ENCODE measurements at regions of chr13 and their contacts with region 1.

Region 1: DNA sequence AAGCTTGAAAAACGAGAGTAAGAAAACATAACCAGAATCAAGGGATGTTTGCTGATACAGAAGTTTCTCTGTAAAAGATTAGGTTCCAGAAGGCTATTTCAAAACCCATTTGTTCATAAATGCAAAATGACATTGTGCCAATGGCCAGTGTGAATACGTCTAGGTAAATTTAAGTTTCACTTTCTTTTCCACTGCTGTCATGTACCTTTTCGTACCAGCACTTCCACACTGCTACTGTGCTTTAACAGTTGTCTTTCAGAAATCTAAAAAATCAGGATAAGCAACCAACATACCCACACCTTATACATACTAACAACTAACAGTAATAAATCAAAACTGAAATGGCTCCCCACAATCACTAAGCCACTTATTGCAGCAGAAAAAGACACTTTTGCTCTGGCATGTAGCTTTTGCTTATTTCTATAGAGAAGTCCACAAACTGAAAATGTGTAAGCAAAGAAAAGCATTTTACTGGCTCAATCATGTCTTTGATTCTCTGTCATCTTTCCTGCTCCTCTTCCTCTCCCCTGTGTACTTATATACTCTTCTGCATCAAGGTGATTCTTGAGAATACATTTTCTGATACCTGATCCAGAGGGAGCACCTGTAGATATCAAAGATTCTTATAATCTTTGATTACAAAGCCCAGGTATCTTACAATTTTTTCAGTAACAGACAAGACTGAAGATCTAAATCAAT is 34.3 kb downstream of the ELF1 start:
- DNase-seq: no peak
- H3K4me3 ChIP-seq: peak overlapping the region in 2 of 4 donors; percentile 22 to 26
- H3K27ac ChIP-seq: peak overlapping the region; percentile 37 to 65 (median 58)
- H3K4me1 ChIP-seq: peaks cover 0 to 66% (median 39%) of the 10 kb centered on the region in 4 donors
- H3K27me3 ChIP-seq: no peaks in the 10 kb centered on the region
- CTCF ChIP-seq: no peak
- EP300 ChIP-seq: no peak
- POLR2A ChIP-seq: no peak

Region 2: DNA sequence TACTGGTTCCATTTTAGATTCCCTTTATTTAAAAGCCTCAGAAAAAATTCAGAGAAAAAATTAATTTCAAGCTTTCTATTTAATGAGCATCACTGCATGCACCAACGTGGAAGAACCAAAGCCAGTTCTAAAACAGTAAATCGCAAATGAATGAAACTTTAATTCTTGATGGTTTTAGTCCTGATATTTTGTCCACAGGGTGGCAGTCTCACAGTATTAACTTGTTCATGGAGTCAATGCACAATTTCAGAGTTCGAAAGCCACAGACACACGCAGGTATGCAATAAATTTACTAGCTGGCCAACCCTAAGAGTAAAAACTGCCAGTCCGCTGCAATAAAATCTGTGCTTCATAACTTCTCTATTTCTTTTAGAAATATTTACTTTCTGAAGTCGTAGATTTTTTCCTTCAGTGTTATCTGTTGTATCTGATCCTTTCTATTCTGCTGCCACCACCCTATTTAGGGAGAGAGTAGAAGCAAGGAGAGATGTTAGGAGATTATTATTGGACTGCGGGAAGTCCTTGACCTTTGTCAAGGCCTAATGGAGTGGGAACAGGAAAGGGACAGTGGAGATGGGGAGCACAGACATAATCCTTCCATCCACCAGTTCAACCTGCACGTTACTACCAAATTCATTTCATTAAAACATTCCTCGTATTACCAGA is 69.5 kb after region 1 on chr13:
- intact Hi-C with region 1: loop called (anchors 5 kb)
- DNase-seq: no peak
- H3K4me3 ChIP-seq: peak overlapping the region in 1 of 4 donors; percentile 6
- H3K27ac ChIP-seq: peak overlapping the region; percentile 7 to 99 (median 83)
- H3K4me1 ChIP-seq: peaks cover 0 to 94% (median 84%) of the 10 kb centered on the region in 4 donors
- H3K27me3 ChIP-seq: no peaks in the 10 kb centered on the region
- CTCF ChIP-seq: peak; percentile 7 to 65 (median 50)
- EP300 ChIP-seq: no peak
- POLR2A ChIP-seq: no peak

Measured in sigmoid colon (tissue), 7 donors.